PC-9 (cell line): ENCODE measurements at regions of chr5 and their contacts with region 1.

Region 1: GRCh38 chr5:159106569-159107282 is 7.0 kb upstream of the EBF1 start:
- DNase-seq: peak in 1 of 2 experiments; percentile 46
- H3K4me3 ChIP-seq: no peak overlapping the region
- H3K27ac ChIP-seq: no peak overlapping the region
- H3K4me1 ChIP-seq: no peaks in the 10 kb centered on the region
- H3K27me3 ChIP-seq: peaks cover 35% of the 10 kb centered on the region
- CTCF ChIP-seq: peak; percentile 74

Region 2: DNA sequence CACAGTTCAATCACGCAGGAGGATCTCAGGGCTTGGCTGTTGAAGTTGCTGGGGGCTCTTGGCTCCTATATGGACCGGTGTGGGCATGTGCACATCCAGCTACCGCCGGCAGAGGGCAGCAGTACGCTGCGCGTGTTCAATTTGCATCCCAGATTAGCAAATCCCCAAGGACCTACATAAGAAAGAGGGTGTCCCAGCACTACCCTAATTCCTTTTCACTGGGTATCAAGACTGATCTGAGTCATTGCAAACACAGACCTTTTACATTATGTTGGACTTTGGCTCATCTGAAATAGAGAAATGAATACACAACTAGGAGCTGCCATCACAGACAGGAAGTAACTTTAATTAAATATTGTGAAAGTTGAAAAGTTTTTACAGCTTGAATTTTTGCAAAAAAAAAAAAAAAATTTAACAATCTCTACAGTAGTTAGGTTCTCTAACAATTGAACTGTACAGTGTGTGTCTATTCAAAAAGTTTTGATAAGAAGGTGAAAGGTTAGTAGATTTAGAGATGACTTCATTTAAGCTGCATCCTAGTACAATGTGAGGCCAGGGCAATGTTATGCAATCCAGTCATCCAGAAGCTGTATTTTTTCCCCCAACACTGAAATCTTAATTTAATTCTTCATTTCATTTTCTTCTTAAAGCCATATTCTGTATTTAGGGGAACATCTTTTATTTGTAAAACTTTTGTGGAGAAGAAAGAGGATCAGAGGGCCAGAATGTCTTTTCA is 411.0 kb before region 1 on chr5:
- CTCF ChIA-PET with region 1: interaction called, 15 read pairs
- POLR2A ChIA-PET with region 1: no interaction called
- intact Hi-C with region 1: loop called (anchors 1 kb)
- DNase-seq: peak; percentile 39 to 60
- H3K4me3 ChIP-seq: no peak overlapping the region
- H3K27ac ChIP-seq: no peak overlapping the region
- H3K4me1 ChIP-seq: no peaks in the 10 kb centered on the region
- H3K27me3 ChIP-seq: peaks cover 29% of the 10 kb centered on the region
- CTCF ChIP-seq: peak; percentile 97